HCT116 (cell line): ENCODE measurements at regions of chr9 and their contacts with region 1.

Region 1: GRCh38 chr9:19456996-19457692 is 48.3 kb downstream of the ACER2 start:
- DNase-seq: peak; percentile 65
- ATAC-seq: peak; percentile 98
- H3K4me3 ChIP-seq: no peak overlapping the region
- H3K27ac ChIP-seq: no peak overlapping the region
- H3K4me1 ChIP-seq: peaks cover 0 to 4% of the 10 kb centered on the region in 2 experiments; a peak in 2 of 4 replicates
- H3K27me3 ChIP-seq: no peaks in the 10 kb centered on the region
- CTCF ChIP-seq: peak; percentile 71 to 91 (median 89); a peak in 5 of 6 replicates
- POLR2A ChIP-seq: no peak
- RAD21 ChIP-seq: peak; percentile 95

Region 2: DNA sequence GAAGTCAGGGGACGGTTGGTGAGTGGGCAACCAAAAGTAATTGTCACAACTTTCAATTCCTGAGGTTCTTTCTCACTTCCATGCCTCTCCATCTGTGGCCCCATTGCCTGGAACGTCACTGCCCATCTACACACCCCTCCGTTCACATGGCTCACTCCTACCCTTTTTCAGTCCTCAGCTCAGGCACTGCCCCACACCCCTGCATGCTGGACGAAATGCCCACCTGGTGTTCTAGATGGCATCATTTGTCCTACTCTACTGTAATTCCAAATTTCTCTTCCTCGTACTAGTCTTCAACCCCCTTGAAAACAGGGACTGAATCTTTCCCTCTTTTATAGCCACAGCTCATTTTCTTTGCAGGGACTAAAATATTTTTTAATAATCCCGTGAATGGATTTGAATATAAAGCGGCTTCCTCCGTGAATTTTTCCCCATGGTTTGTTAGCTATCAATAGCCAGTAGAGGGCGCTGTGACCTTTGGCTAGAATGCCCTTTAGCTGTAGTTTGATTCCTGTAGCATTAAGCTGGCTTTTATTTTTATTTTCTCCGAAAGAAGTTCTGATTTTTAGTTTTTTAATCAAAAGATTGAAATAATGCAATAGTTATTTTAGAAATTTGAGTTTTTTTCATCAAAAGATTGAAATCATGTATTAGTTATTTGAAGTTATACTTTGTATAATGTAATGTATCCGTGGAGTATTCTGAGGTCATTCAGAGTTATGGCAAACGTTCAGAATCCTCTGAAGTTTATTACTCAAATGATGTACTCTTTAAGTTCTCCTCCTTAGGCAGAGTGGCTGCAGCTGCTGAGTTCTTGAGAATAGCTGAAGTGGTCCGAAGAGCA is 1646.2 kb before region 1 on chr9:
- CTCF ChIA-PET with region 1: interaction called, 7 read pairs
- POLR2A ChIA-PET with region 1: no interaction called
- RAD21 ChIA-PET with region 1: no interaction called
- intact Hi-C with region 1: loop called (anchors 2 kb)
- DNase-seq: peak; percentile 15
- ATAC-seq: no peak
- H3K4me3 ChIP-seq: no peak overlapping the region
- H3K27ac ChIP-seq: no peak overlapping the region
- H3K4me1 ChIP-seq: no peaks in the 10 kb centered on the region
- H3K27me3 ChIP-seq: no peaks in the 10 kb centered on the region
- CTCF ChIP-seq: peak; percentile 36 to 79 (median 71); a peak in 5 of 6 replicates
- POLR2A ChIP-seq: no peak
- RAD21 ChIP-seq: peak; percentile 64

Region 3: DNA sequence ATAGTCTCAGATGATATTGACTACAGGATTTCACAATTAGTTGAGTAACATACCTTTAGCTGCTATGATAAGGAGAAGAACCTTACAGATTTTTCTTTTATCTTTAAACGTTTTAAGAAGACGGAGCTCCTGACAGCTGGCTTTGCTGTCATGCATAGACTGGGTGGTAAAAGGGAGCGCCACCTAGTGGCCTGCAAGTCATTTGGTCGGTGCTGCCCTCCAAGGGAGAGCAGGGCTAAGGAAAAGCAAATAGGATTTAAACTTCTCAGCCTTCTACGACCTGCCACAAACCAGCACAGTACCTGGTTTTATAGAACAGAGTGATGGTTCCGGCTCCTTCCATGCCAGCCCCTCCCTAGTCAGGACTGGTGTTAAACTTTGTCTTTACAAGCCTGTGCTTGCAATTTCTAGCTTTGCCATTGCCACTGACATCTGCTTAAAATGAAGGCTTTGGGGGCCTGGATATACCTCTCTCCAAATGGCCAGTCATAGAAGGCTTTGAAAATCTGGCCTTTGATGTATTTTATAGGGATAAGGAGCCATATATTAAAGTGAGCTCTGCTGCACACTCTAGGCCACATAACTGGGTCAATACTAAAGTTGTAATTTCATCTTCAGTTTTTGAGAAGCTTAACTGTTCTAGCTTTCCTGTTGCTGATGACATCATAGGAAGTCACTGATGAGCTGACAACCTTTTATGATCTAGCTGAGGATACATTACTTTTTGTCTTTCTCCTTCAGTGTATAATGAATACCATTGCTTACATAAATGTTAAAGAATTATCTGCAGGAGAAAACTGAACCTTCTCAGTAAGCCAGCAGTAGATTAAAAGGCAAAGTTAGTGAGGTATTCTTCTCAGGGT is 1014.3 kb before region 1 on chr9:
- CTCF ChIA-PET with region 1: no interaction called
- POLR2A ChIA-PET with region 1: no interaction called
- RAD21 ChIA-PET with region 1: no interaction called
- intact Hi-C with region 1: loop called (anchors 5 kb)
- DNase-seq: peak; percentile 43
- ATAC-seq: peak; percentile 97
- H3K4me3 ChIP-seq: no peak overlapping the region
- H3K27ac ChIP-seq: no peak overlapping the region
- H3K4me1 ChIP-seq: no peaks in the 10 kb centered on the region
- H3K27me3 ChIP-seq: no peaks in the 10 kb centered on the region
- CTCF ChIP-seq: peak; percentile 60 to 87 (median 82)
- POLR2A ChIP-seq: no peak
- RAD21 ChIP-seq: peak; percentile 47

Region 4: GRCh38 chr9:19048966-19049916 is 407.9 kb before region 1 on chr9 and contains the start of gene RRAGA:
- CTCF ChIA-PET with region 1: interaction called, 34 read pairs
- POLR2A ChIA-PET with region 1: interaction called, 3 read pairs
- RAD21 ChIA-PET with region 1: interaction called in 1 of 2 experiments, 3 read pairs
- intact Hi-C with region 1: loop called (anchors 1 kb)
- DNase-seq: peak; percentile 89
- ATAC-seq: peak; percentile 92
- H3K4me3 ChIP-seq: peak within 1 kb of the TSS; percentile 71 to 88
- H3K27ac ChIP-seq: peak within 1 kb of the TSS; percentile 60
- H3K4me1 ChIP-seq: peaks cover 6 to 21% of the 10 kb centered on the region in 2 experiments; a peak in 3 of 4 replicates
- H3K27me3 ChIP-seq: no peaks in the 10 kb centered on the region
- CTCF ChIP-seq: peak; percentile 80 to 94 (median 85)
- POLR2A ChIP-seq: peak; percentile 56
- RAD21 ChIP-seq: peak; percentile 76
- total RNA-seq, gene RRAGA: 47.3 TPM

Region 5: GRCh38 chr9:19184144-19184917 is 272.8 kb before region 1 on chr9:
- CTCF ChIA-PET with region 1: interaction called, 4 read pairs
- POLR2A ChIA-PET with region 1: no interaction called
- RAD21 ChIA-PET with region 1: no interaction called
- intact Hi-C with region 1: loop called (anchors 10 kb)
- DNase-seq: peak; percentile 59
- ATAC-seq: peak; percentile 96
- H3K4me3 ChIP-seq: peak overlapping the region in 1 of 2 experiments; percentile 39; a peak in 2 of 4 replicates
- H3K27ac ChIP-seq: peak overlapping the region; percentile 42
- H3K4me1 ChIP-seq: peaks cover 16 to 26% of the 10 kb centered on the region in 2 experiments
- H3K27me3 ChIP-seq: no peaks in the 10 kb centered on the region
- CTCF ChIP-seq: no peak
- POLR2A ChIP-seq: no peak
- RAD21 ChIP-seq: no peak